ENCODE measurements at regions of chr2 and their contacts with region 1.

Region 1: GRCh38 chr2:85132834-85133637 is at the start of gene TCF7L1:
- DNase-seq: peak; percentile 91 to 96 (median 95)
- ATAC-seq: peak; percentile 95
- H3K4me3 ChIP-seq: peak within 1 kb of the TSS; percentile 87
- H3K27ac ChIP-seq: peak within 1 kb of the TSS; percentile 37
- H3K4me1 ChIP-seq: peaks cover 11% of the 10 kb centered on the region
- H3K27me3 ChIP-seq: no peaks in the 10 kb centered on the region
- total RNA-seq, gene TCF7L1: 12.0 to 13.8 (median 12.7) TPM

Region 2: DNA sequence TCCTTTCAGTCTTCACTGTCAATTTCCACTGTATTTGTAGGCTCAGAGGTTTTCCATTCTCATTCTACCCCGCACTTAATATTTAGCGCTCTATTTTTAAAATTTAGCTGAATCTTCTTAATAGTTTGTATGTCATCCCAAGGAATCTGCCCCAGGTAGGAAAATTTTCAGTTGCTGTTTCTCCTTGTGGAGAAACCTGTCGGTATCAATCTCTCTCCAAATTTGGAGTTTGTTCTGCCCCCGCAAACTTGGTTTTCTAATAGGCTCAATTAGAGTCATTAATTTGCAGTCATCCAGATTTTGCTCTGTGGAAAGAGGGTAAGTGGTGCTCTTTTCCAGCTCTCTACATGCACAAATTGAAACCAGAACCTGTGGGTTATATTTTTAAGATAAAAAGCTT is 529.1 kb before region 1 on chr2:
- intact Hi-C with region 1: no loop called
- DNase-seq: no peak
- ATAC-seq: no peak
- H3K4me3 ChIP-seq: no peak overlapping the region
- H3K27ac ChIP-seq: no peak overlapping the region
- H3K4me1 ChIP-seq: no peaks in the 10 kb centered on the region
- H3K27me3 ChIP-seq: no peaks in the 10 kb centered on the region

Region 3: DNA sequence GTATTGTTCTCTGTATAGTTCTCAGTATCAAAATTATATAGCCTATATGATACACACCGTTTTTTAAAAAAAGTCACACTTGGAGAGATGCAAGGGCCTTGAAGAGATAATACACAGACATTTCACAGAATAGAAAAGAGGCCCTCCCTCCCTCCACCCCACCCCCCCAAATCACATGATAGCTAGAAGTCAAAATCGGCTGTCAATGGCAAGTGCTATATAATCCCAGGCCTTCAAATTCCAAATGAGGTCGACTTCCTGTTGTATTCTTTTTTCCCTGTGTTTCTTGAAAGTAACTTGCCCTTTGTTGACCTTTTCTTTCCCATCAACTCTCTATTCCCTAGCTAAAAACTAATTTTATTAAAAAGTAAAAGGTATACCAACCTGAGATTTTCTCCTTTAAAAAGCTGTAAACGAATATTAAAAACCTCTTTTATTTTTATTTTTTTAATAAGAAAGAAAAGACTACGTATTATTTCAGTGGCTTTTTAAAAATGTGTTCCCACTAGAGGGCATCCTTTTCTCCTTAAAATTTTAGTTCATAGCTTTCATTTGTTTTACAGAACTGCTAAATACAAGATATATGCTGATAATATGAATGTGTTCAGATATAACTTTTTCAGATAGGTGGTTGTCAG is 115.5 kb before region 1 on chr2:
- intact Hi-C with region 1: no loop called
- DNase-seq: no peak
- ATAC-seq: no peak
- H3K4me3 ChIP-seq: no peak overlapping the region
- H3K27ac ChIP-seq: no peak overlapping the region
- H3K4me1 ChIP-seq: peaks cover 3% of the 10 kb centered on the region
- H3K27me3 ChIP-seq: no peaks in the 10 kb centered on the region

Region 4: GRCh38 chr2:85243101-85244072 is 110.4 kb after region 1 on chr2:
- intact Hi-C with region 1: loop called in 1 of 4 experiments (anchors 5 kb)
- DNase-seq: peak; percentile 70 to 86 (median 84)
- ATAC-seq: peak; percentile 51 to 72
- H3K4me3 ChIP-seq: no peak overlapping the region
- H3K27ac ChIP-seq: no peak overlapping the region
- H3K4me1 ChIP-seq: peaks cover 18% of the 10 kb centered on the region
- H3K27me3 ChIP-seq: no peaks in the 10 kb centered on the region

Region 5: DNA sequence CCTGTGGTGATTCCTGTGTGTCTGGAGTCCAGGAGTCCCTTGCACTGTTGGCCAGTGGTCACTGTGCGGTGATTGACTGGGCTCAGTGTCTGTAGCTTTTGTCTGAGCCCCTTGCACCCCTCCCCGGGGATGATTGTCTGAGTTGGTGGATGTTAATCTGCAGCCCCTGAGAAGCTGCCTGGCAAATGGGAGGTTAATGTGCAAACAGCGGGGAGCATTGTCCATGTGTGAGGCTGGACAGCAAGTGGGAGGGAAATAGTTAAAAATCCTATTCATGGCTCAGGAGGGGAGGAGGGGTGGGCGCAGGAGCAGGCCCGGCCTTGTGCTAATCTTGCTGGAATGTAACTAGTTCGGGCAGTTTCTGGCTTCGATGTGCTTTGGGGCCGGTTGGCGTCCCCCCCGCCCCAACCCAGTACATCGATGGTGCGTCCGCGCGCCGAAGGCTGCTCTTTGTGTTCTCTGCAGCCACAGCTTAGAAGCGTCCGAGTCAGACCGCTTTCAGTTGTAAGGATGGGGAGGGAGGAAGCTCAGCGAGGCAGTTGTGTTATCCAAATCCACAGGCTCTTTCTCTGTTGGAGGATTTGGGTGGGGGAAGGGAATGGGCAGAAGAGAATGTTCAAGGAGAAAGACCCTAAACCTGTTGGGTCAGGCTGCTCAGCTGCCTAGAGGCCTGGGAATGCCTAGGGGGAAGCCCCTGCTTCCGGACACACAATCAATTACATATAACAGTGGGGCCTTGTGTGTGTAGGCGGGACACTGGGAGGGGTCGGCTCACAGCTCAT is 123.0 kb after region 1 on chr2:
- intact Hi-C with region 1: loop called in 1 of 4 experiments (anchors 5 kb)
- DNase-seq: peak in 2 of 3 donors; percentile 78 to 79
- ATAC-seq: peak; percentile 30 to 34
- H3K4me3 ChIP-seq: no peak overlapping the region
- H3K27ac ChIP-seq: peak overlapping the region; percentile 30
- H3K4me1 ChIP-seq: peaks cover 43% of the 10 kb centered on the region
- H3K27me3 ChIP-seq: no peaks in the 10 kb centered on the region

Region 6: DNA sequence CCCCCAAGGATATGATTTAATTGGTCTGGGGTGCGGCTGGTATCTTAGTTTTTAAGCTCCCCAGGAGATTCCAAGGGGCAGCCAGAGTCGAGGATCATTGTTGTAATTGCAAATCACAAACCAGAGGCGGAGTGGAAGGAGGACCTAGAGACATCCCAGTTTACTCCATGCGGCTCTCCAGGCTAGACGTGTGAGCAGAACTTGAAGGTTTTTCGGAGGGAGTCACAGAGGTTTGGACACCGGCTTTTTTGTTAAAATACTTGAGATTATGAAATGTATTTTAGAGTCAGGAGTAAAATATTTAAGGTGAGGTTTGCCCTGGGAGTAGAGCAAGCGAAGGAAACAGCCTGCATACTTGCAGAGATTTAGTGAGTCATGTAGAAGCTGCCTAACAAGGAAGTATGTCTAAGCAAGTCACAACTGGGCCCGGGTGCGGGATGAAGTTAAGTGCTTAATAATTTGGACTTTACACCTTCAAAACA is 155.2 kb after region 1 on chr2:
- intact Hi-C with region 1: loop called (anchors 1 to 5 kb)
- DNase-seq: no peak
- ATAC-seq: no peak
- H3K4me3 ChIP-seq: no peak overlapping the region
- H3K27ac ChIP-seq: no peak overlapping the region
- H3K4me1 ChIP-seq: no peaks in the 10 kb centered on the region
- H3K27me3 ChIP-seq: no peaks in the 10 kb centered on the region